ENCODE measurements at regions of chr17 and their contacts with region 1.

Region 1: DNA sequence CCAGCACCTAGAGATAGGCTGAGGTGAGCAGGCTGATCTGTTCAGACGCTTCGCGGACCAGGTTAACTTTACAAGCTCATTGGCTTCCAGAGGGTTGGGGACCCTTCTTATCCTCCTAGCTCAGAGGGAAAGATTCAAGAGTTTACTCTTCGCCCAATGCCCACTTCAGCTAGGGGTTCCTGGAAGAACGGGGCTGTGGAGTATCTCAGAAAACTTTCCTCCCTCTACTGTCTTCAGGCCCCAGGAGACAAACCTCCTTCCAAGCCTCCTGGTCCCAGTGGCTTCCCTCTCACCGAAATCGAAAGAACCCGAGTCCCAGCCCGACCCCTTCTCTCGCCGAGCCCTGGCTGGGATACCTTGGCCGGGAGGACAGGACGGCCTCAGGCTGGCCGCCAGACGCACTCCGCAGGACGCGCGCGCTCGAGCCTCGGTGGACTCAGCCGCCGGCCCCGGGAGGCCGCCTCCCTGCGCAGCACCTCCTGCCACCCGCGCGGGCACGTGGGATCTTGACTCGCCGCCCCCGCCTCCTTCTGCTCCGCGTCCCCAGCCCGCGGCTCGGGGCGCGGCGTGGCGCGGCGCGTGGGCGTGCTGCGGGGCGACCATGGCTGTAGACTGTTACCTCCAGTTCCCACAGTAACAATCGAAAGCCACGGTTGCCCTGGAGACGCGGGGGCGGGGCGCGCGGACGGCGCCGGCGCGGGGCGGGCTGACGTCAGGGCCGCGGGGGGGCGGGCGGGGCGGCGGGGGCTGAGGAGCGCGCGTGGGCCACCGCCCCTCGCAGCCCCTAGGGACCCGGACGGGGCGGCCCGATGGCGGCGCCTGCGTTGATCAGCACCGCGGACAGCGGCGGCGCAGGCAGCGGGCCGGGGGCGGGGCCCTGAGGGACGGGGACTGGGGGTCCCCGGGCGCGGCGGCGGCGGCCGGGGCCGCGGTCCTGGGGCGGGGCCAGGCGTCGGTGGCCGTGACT is 5.3 kb upstream of the HIC1 start:
- DNase-seq: peak; percentile 91
- ATAC-seq: peak; percentile 81
- H3K4me3 Mint-ChIP-seq: peak overlapping the region; percentile 72
- H3K27ac Mint-ChIP-seq: peak overlapping the region; percentile 53
- H3K4me1 Mint-ChIP-seq: peaks cover 30% of the 10 kb centered on the region
- H3K27me3 Mint-ChIP-seq: peaks cover 15% of the 10 kb centered on the region
- CTCF ChIP-seq: no peak

Region 2: DNA sequence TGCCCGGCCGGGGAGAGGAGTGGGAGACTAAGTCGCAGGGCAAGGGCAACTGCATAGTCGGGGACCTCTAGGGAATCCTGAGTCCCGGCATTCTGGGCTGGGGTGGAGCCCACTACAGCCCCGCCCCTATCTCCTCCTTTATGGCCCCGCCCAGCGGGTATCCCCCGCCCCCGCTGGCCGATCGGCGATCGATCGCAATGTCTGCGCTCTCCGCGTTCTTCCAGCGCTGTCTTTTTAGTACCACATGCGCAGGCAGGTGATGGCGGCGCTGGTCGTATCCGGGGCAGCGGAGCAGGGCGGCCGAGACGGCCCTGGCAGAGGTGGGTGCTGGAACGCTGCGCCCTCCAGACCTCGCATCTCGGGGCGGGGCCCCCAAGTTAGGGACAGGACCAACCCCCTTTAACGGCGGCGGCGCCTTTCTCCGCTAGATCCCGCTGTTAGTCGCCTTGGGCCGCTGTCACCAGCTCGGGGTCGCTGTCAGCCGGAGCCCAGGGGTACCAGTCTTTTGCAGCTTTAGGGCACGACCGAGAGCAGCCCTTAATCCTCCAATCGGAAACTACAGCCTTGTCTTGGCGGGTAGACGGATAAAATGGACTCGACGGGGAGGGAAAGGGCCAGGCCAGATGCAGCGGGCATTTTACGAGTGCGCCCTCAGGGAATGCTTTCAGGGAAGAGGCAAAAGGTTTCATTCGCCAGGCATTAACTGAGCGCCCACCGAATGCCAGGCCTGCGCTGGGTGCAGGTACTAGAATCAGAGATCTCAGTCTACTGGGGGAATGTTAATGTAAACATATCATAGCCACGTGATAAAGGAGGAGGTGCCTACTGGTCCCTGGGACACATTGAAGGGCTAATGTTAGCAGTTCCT is 19.5 kb before region 1 on chr17 and contains the start of gene DPH1:
- CTCF ChIA-PET with region 1: interaction called, 3 read pairs
- POLR2A ChIA-PET with region 1: interaction called, 4 read pairs
- intact Hi-C with region 1: loop called (anchors 1 kb)
- DNase-seq: peak; percentile 80
- ATAC-seq: peak; percentile 78
- H3K4me3 Mint-ChIP-seq: peak within 1 kb of the TSS; percentile 96
- H3K27ac Mint-ChIP-seq: peak within 1 kb of the TSS; percentile 83
- H3K4me1 Mint-ChIP-seq: peaks cover 40% of the 10 kb centered on the region
- H3K27me3 Mint-ChIP-seq: peaks cover 25% of the 10 kb centered on the region
- CTCF ChIP-seq: no peak
- total RNA-seq, gene DPH1: 49.3 and 63.4 TPM in 2 replicates

Region 3: GRCh38 chr17:2468270-2468669 is 418.7 kb after region 1 on chr17:
- CTCF ChIA-PET with region 1: no interaction called
- POLR2A ChIA-PET with region 1: no interaction called
- intact Hi-C with region 1: no loop called
- DNase-seq: no peak
- ATAC-seq: no peak
- H3K4me3 Mint-ChIP-seq: no peak overlapping the region
- H3K27ac Mint-ChIP-seq: no peak overlapping the region
- H3K4me1 Mint-ChIP-seq: no peaks in the 10 kb centered on the region
- H3K27me3 Mint-ChIP-seq: no peaks in the 10 kb centered on the region
- CTCF ChIP-seq: no peak

Region 4: DNA sequence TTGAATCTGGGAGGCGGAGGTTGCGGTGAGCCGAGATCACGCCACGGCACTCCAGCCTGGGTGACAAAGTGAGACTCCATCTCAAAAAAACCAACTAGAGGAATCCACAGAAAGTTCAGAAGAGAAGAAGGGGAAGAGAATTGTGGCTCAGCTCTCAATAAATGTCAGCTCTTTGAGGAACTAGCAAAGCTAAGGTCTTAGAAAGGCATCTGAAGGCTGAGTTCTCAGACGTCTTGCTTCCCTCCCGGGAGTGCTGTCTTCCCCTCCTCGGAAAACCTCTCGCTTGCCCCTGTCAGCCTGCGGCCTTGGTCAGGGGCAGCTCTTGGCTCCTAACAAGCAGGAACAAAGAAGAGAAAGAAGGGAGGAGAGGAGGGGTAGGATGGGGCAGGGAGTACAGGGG is 1581.2 kb after region 1 on chr17:
- CTCF ChIA-PET with region 1: no interaction called
- POLR2A ChIA-PET with region 1: interaction called, 15 read pairs
- intact Hi-C with region 1: no loop called
- DNase-seq: no peak
- ATAC-seq: no peak
- H3K4me3 Mint-ChIP-seq: no peak overlapping the region
- H3K27ac Mint-ChIP-seq: no peak overlapping the region
- H3K4me1 Mint-ChIP-seq: peaks cover 10% of the 10 kb centered on the region
- H3K27me3 Mint-ChIP-seq: no peaks in the 10 kb centered on the region
- CTCF ChIP-seq: no peak

Measured in activated B cell treated with CpG ODN at 0.5 μM for 24 hours (primary cell).